CD8-positive, alpha-beta T cell (primary cell): ENCODE measurements at regions of chr5 and their contacts with region 1.

Region 1: GRCh38 chr5:175657593-175658271 is at the start of gene HRH2:
- DNase-seq: peak in 7 of 9 experiments; percentile 28 to 61 (median 49)
- ATAC-seq: peak; percentile 43
- H3K4me3 ChIP-seq: peak within 1 kb of the TSS; percentile 63 to 84
- H3K4me3 Mint-ChIP-seq: peak within 1 kb of the TSS; percentile 93
- H3K27ac ChIP-seq: peak within 1 kb of the TSS in 1 of 2 experiments; percentile 31
- H3K27ac Mint-ChIP-seq: peak within 1 kb of the TSS; percentile 76
- H3K4me1 ChIP-seq: peaks cover 68% of the 10 kb centered on the region
- H3K4me1 Mint-ChIP-seq: peaks cover 80% of the 10 kb centered on the region
- H3K27me3 ChIP-seq: peaks cover 0 to 7% of the 10 kb centered on the region in 2 experiments
- H3K27me3 Mint-ChIP-seq: no peaks in the 10 kb centered on the region
- CTCF ChIP-seq: no peak
- total RNA-seq, gene HRH2: 1.4 to 1.6 TPM

Region 2: DNA sequence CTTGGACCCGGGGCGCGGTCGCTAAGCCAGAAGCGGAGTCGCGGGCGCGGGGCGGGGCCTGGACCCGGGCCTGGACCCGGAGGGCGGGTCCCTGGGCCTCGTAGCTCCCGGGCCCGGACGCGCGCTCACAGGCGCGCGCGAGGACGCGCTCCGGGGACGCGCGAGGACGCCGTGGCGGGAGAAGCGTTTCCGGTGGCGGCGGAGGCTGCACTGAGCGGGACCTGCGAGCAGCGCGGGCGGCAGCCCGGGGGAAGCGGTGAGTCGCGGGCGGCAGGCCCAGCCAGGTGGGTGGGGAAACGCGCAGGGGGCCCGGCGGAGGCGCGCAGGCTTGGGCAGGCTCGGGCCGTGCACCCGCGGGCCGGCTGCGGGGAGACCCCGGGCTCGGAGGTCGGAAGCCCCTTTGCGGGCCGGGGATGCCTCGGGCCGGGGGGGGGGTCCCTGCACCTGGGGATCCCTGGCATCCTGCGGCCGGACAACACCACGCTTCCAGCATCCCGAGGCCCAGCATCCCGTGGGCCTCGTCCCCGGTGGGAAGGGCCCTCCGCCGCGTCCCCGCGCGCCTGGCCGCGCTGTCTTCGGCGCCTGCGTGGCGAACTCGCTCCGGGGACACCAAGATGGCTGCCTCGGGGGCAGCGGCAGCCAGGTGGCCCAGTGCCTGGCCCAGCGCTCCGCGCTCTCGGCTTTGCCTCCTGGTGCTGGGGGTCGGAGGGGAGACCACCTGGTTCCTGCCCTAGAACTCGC is 179.2 kb before region 1 on chr5 and contains the start of gene SFXN1:
- CTCF ChIA-PET with region 1: interaction called, 3 read pairs
- POLR2A ChIA-PET with region 1: no interaction called
- intact Hi-C with region 1: loop called (anchors 1 to 5 kb)
- DNase-seq: peak; percentile 43 to 89 (median 75)
- ATAC-seq: peak; percentile 32
- H3K4me3 ChIP-seq: peak within 1 kb of the TSS; percentile 74 to 80
- H3K4me3 Mint-ChIP-seq: peak within 1 kb of the TSS; percentile 96
- H3K27ac ChIP-seq: peak within 1 kb of the TSS; percentile 67 to 75
- H3K27ac Mint-ChIP-seq: peak within 1 kb of the TSS; percentile 97
- H3K4me1 ChIP-seq: peaks cover 48% of the 10 kb centered on the region
- H3K4me1 Mint-ChIP-seq: peaks cover 49% of the 10 kb centered on the region
- H3K27me3 ChIP-seq: no peaks in the 10 kb centered on the region
- H3K27me3 Mint-ChIP-seq: no peaks in the 10 kb centered on the region
- CTCF ChIP-seq: no peak
- total RNA-seq, gene SFXN1: 169 to 174 TPM

Region 3: GRCh38 chr5:175484322-175484721 is 173.4 kb before region 1 on chr5:
- CTCF ChIA-PET with region 1: interaction called, 3 read pairs
- POLR2A ChIA-PET with region 1: no interaction called
- intact Hi-C with region 1: loop called (anchors 1 to 5 kb)
- DNase-seq: peak in 1 of 9 experiments; percentile 40
- ATAC-seq: no peak
- H3K4me3 ChIP-seq: no peak overlapping the region
- H3K4me3 Mint-ChIP-seq: peak overlapping the region; percentile 69
- H3K27ac ChIP-seq: no peak overlapping the region
- H3K27ac Mint-ChIP-seq: peak overlapping the region; percentile 52
- H3K4me1 ChIP-seq: peaks cover 64% of the 10 kb centered on the region
- H3K4me1 Mint-ChIP-seq: peaks cover 91% of the 10 kb centered on the region
- H3K27me3 ChIP-seq: no peaks in the 10 kb centered on the region
- H3K27me3 Mint-ChIP-seq: no peaks in the 10 kb centered on the region
- CTCF ChIP-seq: no peak

Region 4: GRCh38 chr5:175696139-175696854 is 38.6 kb after region 1 on chr5:
- CTCF ChIA-PET with region 1: interaction called, 9 read pairs
- POLR2A ChIA-PET with region 1: no interaction called
- intact Hi-C with region 1: loop called in 1 of 2 experiments (anchors 5 kb)
- DNase-seq: peak; percentile 21 to 83 (median 71)
- ATAC-seq: peak; percentile 70
- H3K4me3 ChIP-seq: no peak overlapping the region
- H3K4me3 Mint-ChIP-seq: no peak overlapping the region
- H3K27ac ChIP-seq: no peak overlapping the region
- H3K27ac Mint-ChIP-seq: peak overlapping the region; percentile 76
- H3K4me1 ChIP-seq: peaks cover 11% of the 10 kb centered on the region
- H3K4me1 Mint-ChIP-seq: peaks cover 28% of the 10 kb centered on the region
- H3K27me3 ChIP-seq: no peaks in the 10 kb centered on the region
- H3K27me3 Mint-ChIP-seq: no peaks in the 10 kb centered on the region
- CTCF ChIP-seq: peak; percentile 57